ENCODE measurements at regions of chr14 and their contacts with region 1.

Region 1: GRCh38 chr14:72986214-72986613 is 40.7 kb downstream of the ZFYVE1 start:
- DNase-seq: no peak
- ATAC-seq: no peak
- H3K4me3 ChIP-seq: no peak overlapping the region
- H3K27ac ChIP-seq: no peak overlapping the region
- H3K4me1 ChIP-seq: no peaks in the 10 kb centered on the region
- H3K27me3 ChIP-seq: no peaks in the 10 kb centered on the region
- CTCF ChIP-seq: no peak

Region 2: GRCh38 chr14:72926292-72927028 is 59.8 kb before region 1 on chr14 and contains the start of gene DCAF4:
- CTCF ChIA-PET with region 1: no interaction called
- POLR2A ChIA-PET with region 1: no interaction called
- intact Hi-C with region 1: no loop called
- DNase-seq: peak; percentile 99
- ATAC-seq: peak; percentile 96
- H3K4me3 ChIP-seq: peak within 1 kb of the TSS; percentile 77
- H3K27ac ChIP-seq: peak within 1 kb of the TSS; percentile 63
- H3K4me1 ChIP-seq: peaks cover 12% of the 10 kb centered on the region
- H3K27me3 ChIP-seq: no peaks in the 10 kb centered on the region
- CTCF ChIP-seq: no peak
- total RNA-seq, gene DCAF4: 55.8 and 56.8 TPM in 2 replicates

Region 3: DNA sequence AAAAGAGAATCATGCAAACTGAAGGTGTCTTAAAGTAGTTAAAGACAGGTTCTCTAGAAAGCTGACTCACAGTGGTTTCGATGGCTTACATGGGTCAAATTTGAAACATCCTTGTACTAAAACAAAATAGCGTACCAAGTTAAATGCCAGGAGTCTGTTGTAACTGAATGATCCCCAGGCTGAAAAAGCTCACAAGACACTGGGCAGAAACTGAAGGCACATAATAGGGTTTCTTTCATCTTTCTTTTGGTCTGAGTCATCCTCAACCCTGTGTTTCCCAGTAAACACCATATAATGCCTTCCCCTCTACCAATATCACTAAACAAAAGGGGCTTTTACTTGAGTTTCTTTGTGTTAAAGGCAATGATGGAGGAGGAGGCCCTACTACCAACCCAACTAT is 27.9 kb after region 1 on chr14:
- CTCF ChIA-PET with region 1: no interaction called
- POLR2A ChIA-PET with region 1: interaction called, 10 read pairs
- intact Hi-C with region 1: no loop called
- DNase-seq: no peak
- ATAC-seq: peak; percentile 48
- H3K4me3 ChIP-seq: no peak overlapping the region
- H3K27ac ChIP-seq: no peak overlapping the region
- H3K4me1 ChIP-seq: peaks cover 8% of the 10 kb centered on the region
- H3K27me3 ChIP-seq: no peaks in the 10 kb centered on the region
- CTCF ChIP-seq: no peak

Region 4: DNA sequence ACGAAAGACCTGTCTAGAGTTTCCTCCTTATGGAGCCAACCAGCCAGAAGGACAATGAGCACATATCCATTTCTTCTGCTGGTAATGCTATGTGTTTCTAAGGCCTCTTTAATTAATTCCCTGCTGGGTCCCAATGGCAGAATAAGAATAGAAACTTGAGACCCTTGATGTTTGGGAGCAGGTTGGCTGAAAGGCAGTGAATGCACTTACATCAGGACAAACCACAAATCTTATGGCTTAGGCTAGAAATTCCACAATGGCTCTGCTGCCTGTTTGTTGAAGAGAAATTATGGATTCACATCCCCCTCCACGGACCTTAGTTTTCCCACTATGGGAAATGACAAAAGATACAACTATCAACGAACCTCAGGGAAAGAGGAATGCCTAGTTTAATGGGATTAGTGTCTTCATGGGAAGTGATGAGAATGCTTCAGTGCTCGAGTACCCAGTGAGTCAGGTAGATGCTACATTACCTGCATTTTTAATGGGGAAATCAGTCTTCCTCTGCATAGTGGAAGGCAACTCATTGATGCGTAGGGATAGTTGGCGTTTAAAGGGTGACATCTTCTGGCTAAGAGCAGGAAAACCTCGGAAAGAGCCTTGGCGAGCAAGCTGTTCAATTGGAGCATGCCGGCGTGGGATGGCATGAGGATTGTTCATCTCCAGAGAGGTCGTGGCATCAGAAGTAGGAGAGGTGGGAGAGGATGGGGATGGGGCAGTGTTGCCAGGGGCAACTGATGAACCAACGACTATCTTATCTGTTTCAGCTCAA is 297.6 kb after region 1 on chr14:
- CTCF ChIA-PET with region 1: no interaction called
- POLR2A ChIA-PET with region 1: no interaction called
- intact Hi-C with region 1: no loop called
- DNase-seq: peak; percentile 75
- ATAC-seq: peak; percentile 76
- H3K4me3 ChIP-seq: no peak overlapping the region
- H3K27ac ChIP-seq: no peak overlapping the region
- H3K4me1 ChIP-seq: peaks cover 9% of the 10 kb centered on the region; the same call in 1 of the 2 replicates
- H3K27me3 ChIP-seq: no peaks in the 10 kb centered on the region
- CTCF ChIP-seq: peak; percentile 86